Activated CD8-positive, alpha-beta memory T cell treated with anti-CD3 and anti-CD28 coated beads, Interleukin-2, amount 10 ng/mL, durations not matched to agents 7 days and 5 days (primary cell): ENCODE measurements at regions of chr15 and their contacts with region 1.

Region 1: GRCh38 chr15:88454867-88455810 is 12.0 kb downstream of the MRPL46 start:
- DNase-seq: peak; percentile 58
- ATAC-seq: peak; percentile 91
- H3K4me3 Mint-ChIP-seq: no peak overlapping the region
- H3K27ac Mint-ChIP-seq: no peak overlapping the region
- H3K4me1 Mint-ChIP-seq: peaks cover 2% of the 10 kb centered on the region
- H3K27me3 Mint-ChIP-seq: no peaks in the 10 kb centered on the region

Region 2: GRCh38 chr15:88467073-88467934 is 12.2 kb after region 1 on chr15 and contains the starts of genes MRPL46 and MRPS11:
- CTCF ChIA-PET with region 1: interaction called, 13 read pairs
- DNase-seq: peak; percentile 92
- ATAC-seq: peak; percentile 94
- H3K4me3 Mint-ChIP-seq: peak within 1 kb of the TSS; percentile 91
- H3K27ac Mint-ChIP-seq: peak within 1 kb of the TSS; percentile 95
- H3K4me1 Mint-ChIP-seq: peaks cover 34% of the 10 kb centered on the region
- H3K27me3 Mint-ChIP-seq: no peaks in the 10 kb centered on the region
- total RNA-seq, gene MRPL46: 28.3 to 35.3 TPM
- total RNA-seq, gene MRPS11: 59.7 to 67.7 TPM